MCF 10A (cell line): ENCODE measurements at regions of chr18 and their contacts with region 1.

Region 1: DNA sequence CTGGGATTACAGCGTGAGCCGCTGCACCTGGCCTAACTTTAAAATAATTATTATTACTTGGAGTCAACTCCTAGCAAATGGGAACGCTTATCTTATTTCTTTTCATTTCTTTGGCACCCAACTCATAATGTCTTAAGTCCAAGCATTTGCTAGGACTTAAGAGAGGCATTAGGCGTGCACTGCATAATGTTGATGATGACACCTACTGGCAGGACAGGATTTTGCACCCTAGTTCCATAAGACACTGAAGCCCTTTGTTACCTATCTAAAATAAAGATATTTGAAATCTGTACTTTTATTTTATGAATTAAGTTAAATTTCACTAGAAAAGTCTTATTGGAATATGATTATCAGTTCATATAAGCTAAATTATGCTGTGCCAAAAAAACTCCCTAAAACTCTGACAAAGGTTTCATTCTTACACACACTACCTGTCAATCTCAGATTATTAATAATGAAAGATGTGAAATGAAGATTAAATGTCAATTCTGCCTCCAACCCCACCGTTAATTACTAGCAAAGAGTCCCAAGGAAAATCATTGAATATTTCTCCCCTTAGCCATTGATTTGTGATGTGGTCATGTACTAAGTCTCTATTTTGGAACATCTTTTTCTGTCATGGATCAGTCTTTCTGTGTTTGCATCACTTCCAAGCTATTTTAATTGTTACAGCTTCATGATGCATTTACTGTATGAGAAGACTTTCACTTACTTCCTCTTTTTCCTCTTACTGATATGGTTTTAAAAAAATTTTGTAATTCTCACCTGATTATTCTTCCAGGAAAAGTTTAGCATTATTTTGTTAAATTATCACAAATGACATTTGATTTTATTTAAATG is 12.7 kb upstream of the CDH2 start:
- DNase-seq: peak; percentile 70
- H3K4me3 Mint-ChIP-seq: no peak overlapping the region
- H3K27ac Mint-ChIP-seq: no peak overlapping the region
- H3K4me1 Mint-ChIP-seq: no peaks in the 10 kb centered on the region
- H3K27me3 Mint-ChIP-seq: no peaks in the 10 kb centered on the region
- CTCF ChIP-seq: peak; percentile 60

Region 2: GRCh38 chr18:27605107-27605834 is 584.3 kb before region 1 on chr18:
- CTCF ChIA-PET with region 1: interaction called, 12 read pairs
- POLR2A ChIA-PET with region 1: no interaction called
- intact Hi-C with region 1: loop called (anchors 1 kb)
- DNase-seq: peak; percentile 78
- H3K4me3 Mint-ChIP-seq: no peak overlapping the region
- H3K27ac Mint-ChIP-seq: no peak overlapping the region
- H3K4me1 Mint-ChIP-seq: peaks cover 5% of the 10 kb centered on the region
- H3K27me3 Mint-ChIP-seq: no peaks in the 10 kb centered on the region
- CTCF ChIP-seq: peak; percentile 72

Region 3: GRCh38 chr18:27685807-27686412 is 503.7 kb before region 1 on chr18:
- CTCF ChIA-PET with region 1: interaction called, 19 read pairs
- POLR2A ChIA-PET with region 1: no interaction called
- intact Hi-C with region 1: loop called (anchors 1 kb)
- DNase-seq: peak; percentile 48
- H3K4me3 Mint-ChIP-seq: no peak overlapping the region
- H3K27ac Mint-ChIP-seq: no peak overlapping the region
- H3K4me1 Mint-ChIP-seq: no peaks in the 10 kb centered on the region
- H3K27me3 Mint-ChIP-seq: no peaks in the 10 kb centered on the region
- CTCF ChIP-seq: peak; percentile 59

Region 4: DNA sequence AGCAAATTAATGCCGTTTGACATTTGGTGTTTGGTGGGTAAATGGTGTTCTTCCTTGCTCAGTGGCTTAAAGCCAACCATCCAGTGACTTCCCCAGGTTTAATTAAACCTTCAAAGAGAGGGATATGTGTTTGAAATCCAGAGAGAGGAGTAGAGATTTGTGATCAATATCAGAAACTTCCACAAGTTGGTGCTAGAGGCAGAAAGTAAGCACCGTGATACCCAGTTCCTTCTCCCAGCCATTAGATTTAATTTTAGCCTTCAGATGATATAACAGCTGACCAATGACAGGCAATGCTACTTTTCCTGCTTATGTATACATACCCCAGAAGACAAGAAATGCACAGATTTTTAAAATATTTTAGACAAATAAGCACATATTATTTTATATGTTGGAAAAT is 411.2 kb before region 1 on chr18:
- CTCF ChIA-PET with region 1: interaction called, 8 read pairs
- POLR2A ChIA-PET with region 1: no interaction called
- intact Hi-C with region 1: loop called (anchors 2 kb)
- DNase-seq: peak; percentile 8
- H3K4me3 Mint-ChIP-seq: no peak overlapping the region
- H3K27ac Mint-ChIP-seq: no peak overlapping the region
- H3K4me1 Mint-ChIP-seq: no peaks in the 10 kb centered on the region
- H3K27me3 Mint-ChIP-seq: no peaks in the 10 kb centered on the region
- CTCF ChIP-seq: peak; percentile 39

Region 5: DNA sequence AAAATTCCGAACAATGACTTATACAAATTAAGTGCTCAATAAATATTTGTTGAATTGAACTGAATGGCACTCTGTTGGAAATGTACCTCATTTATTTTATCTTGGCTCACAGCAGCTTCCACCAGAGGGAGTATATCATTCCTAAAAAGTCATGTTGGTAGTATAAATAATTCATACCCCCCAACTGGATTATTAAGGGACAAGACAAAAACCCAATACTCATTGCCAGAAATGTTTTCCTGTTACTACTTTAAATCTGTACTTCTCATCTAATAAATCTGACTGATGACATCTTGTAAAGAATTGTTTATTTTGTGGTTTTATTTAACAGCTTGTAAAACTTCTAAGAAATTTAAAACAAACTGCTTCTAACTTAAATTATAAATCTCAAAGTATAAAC is 176.6 kb before region 1 on chr18:
- CTCF ChIA-PET with region 1: no interaction called
- POLR2A ChIA-PET with region 1: no interaction called
- intact Hi-C with region 1: loop called (anchors 1 kb)
- DNase-seq: peak; percentile 15
- H3K4me3 Mint-ChIP-seq: no peak overlapping the region
- H3K27ac Mint-ChIP-seq: no peak overlapping the region
- H3K4me1 Mint-ChIP-seq: no peaks in the 10 kb centered on the region
- H3K27me3 Mint-ChIP-seq: no peaks in the 10 kb centered on the region
- CTCF ChIP-seq: peak; percentile 44

Region 6: GRCh38 chr18:28767727-28768211 is 578.1 kb after region 1 on chr18:
- CTCF ChIA-PET with region 1: no interaction called
- POLR2A ChIA-PET with region 1: no interaction called
- intact Hi-C with region 1: no loop called
- DNase-seq: peak; percentile 44
- H3K4me3 Mint-ChIP-seq: no peak overlapping the region
- H3K27ac Mint-ChIP-seq: peak overlapping the region; percentile 29
- H3K4me1 Mint-ChIP-seq: peaks cover 6% of the 10 kb centered on the region
- H3K27me3 Mint-ChIP-seq: no peaks in the 10 kb centered on the region
- CTCF ChIP-seq: no peak